ENCODE measurements at regions of chr19 and their contacts with region 1.

Region 1: GRCh38 chr19:10194500-10195289 is at the start of gene DNMT1:
- DNase-seq: peak; percentile 89
- ATAC-seq: peak; percentile 90
- H3K4me3 ChIP-seq: peak within 1 kb of the TSS; percentile 74 to 81 (median 80)
- H3K27ac ChIP-seq: peak within 1 kb of the TSS; percentile 79
- H3K4me1 ChIP-seq: peaks cover 48% of the 10 kb centered on the region
- H3K27me3 ChIP-seq: no peaks in the 10 kb centered on the region
- CTCF ChIP-seq: no peak
- EP300 ChIP-seq: peak; percentile 10 to 11; a peak in 1 of 4 replicates
- POLR2A ChIP-seq: peak; percentile 82 to 90
- RAD21 ChIP-seq: 0 out of 2 replicates have a peak, but pooled peaks have one; percentile 8
- total RNA-seq, gene DNMT1: 71.3 and 91.1 TPM in 2 replicates

Region 2: GRCh38 chr19:10142701-10143375 is 51.9 kb before region 1 on chr19:
- CTCF ChIA-PET with region 1: no interaction called
- POLR2A ChIA-PET with region 1: no interaction called
- in situ Hi-C with region 1: no loop called
- intact Hi-C with region 1: no loop called
- DNase-seq: no peak
- ATAC-seq: no peak
- H3K4me3 ChIP-seq: no peak overlapping the region
- H3K27ac ChIP-seq: no peak overlapping the region
- H3K4me1 ChIP-seq: no peaks in the 10 kb centered on the region
- H3K27me3 ChIP-seq: no peaks in the 10 kb centered on the region
- CTCF ChIP-seq: no peak
- EP300 ChIP-seq: no peak
- POLR2A ChIP-seq: no peak
- RAD21 ChIP-seq: no peak

Region 3: GRCh38 chr19:10173257-10173926 is 21.3 kb before region 1 on chr19:
- CTCF ChIA-PET with region 1: no interaction called
- POLR2A ChIA-PET with region 1: no interaction called
- in situ Hi-C with region 1: no loop called
- intact Hi-C with region 1: no loop called
- DNase-seq: no peak
- ATAC-seq: no peak
- H3K4me3 ChIP-seq: no peak overlapping the region
- H3K27ac ChIP-seq: no peak overlapping the region
- H3K4me1 ChIP-seq: no peaks in the 10 kb centered on the region
- H3K27me3 ChIP-seq: no peaks in the 10 kb centered on the region
- CTCF ChIP-seq: no peak
- EP300 ChIP-seq: no peak
- POLR2A ChIP-seq: no peak
- RAD21 ChIP-seq: no peak

Region 4: GRCh38 chr19:10206226-10206885 is 11.7 kb after region 1 on chr19:
- CTCF ChIA-PET with region 1: no interaction called
- POLR2A ChIA-PET with region 1: interaction called, 11 read pairs
- in situ Hi-C with region 1: no loop called
- intact Hi-C with region 1: no loop called
- DNase-seq: peak; percentile 45
- ATAC-seq: peak; percentile 92
- H3K4me3 ChIP-seq: no peak overlapping the region
- H3K27ac ChIP-seq: no peak overlapping the region
- H3K4me1 ChIP-seq: peaks cover 32% of the 10 kb centered on the region
- H3K27me3 ChIP-seq: no peaks in the 10 kb centered on the region; a peak in 2 of 5 replicates
- CTCF ChIP-seq: no peak
- EP300 ChIP-seq: no peak
- POLR2A ChIP-seq: no peak
- RAD21 ChIP-seq: no peak

Region 5: GRCh38 chr19:10238172-10238783 is 43.6 kb after region 1 on chr19:
- CTCF ChIA-PET with region 1: no interaction called
- POLR2A ChIA-PET with region 1: no interaction called
- in situ Hi-C with region 1: no loop called
- intact Hi-C with region 1: loop called (anchors 5 kb)
- DNase-seq: peak; percentile 83
- ATAC-seq: peak; percentile 88
- H3K4me3 ChIP-seq: no peak overlapping the region; a peak in 1 of 6 replicates
- H3K27ac ChIP-seq: no peak overlapping the region
- H3K4me1 ChIP-seq: peaks cover 66% of the 10 kb centered on the region
- H3K27me3 ChIP-seq: no peaks in the 10 kb centered on the region; a peak in 1 of 5 replicates
- CTCF ChIP-seq: peak; percentile 9; the same call in 1 of the 2 replicates
- EP300 ChIP-seq: peak in 1 of 2 experiments; percentile 58; a peak in 2 of 4 replicates
- POLR2A ChIP-seq: no peak
- RAD21 ChIP-seq: no peak

Measured in HepG2 (cell line).